Head of caudate nucleus (tissue), 42 donors: ENCODE measurements at regions of chr9 and their contacts with region 1.

Region 1: DNA sequence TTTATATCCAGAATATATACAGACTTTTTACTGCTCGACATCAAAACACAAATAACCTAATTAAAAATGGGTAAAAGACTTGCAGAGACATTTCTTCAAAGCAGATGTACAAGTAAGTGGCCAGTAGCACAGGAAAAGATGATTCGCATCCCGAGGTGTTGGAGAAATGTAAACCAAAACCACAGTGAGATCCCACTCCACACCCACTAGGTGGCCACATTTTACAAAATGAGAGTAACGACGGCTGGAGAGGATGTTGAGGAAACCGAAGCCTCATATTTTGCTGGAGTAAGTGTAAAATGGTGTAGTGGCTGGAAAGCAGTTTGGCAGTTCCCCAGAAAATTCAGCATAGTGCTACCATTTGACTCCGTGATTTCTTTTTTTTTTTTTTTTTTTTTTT is 21.2 kb upstream of the GBGT1 start:
- DNase-seq: peak in 25 of 42 donors; percentile 28 to 74 (median 53)

Region 2: DNA sequence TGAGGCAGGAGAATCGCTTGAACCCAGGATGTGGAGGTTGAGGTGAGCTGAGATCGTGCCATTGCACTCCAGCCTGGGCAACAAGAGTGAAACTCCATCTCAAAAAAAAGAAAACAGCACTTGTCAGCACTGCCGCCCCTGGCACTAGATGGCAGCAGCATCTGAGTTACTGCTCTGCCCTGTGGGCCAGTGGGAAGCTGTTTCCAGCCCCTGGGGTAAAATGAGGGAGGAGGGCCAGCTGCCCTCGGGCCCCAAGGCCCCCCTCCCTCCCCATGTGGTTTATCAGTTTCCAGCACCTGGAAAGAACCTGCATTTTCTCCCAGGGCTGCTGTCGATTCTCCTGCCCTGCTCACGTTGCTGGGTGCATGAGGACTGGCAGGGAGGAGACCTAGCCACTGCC is 136.4 kb before region 1 on chr9:
- intact Hi-C with region 1: no loop called
- DNase-seq: peak; percentile 29 to 82 (median 62)

Region 3: GRCh38 chr9:133334161-133334560 is 149.2 kb after region 1 on chr9:
- intact Hi-C with region 1: loop called (anchors 5 kb)
- DNase-seq: peak in 4 of 42 donors; percentile 2 to 10 (median 5)

Region 4: DNA sequence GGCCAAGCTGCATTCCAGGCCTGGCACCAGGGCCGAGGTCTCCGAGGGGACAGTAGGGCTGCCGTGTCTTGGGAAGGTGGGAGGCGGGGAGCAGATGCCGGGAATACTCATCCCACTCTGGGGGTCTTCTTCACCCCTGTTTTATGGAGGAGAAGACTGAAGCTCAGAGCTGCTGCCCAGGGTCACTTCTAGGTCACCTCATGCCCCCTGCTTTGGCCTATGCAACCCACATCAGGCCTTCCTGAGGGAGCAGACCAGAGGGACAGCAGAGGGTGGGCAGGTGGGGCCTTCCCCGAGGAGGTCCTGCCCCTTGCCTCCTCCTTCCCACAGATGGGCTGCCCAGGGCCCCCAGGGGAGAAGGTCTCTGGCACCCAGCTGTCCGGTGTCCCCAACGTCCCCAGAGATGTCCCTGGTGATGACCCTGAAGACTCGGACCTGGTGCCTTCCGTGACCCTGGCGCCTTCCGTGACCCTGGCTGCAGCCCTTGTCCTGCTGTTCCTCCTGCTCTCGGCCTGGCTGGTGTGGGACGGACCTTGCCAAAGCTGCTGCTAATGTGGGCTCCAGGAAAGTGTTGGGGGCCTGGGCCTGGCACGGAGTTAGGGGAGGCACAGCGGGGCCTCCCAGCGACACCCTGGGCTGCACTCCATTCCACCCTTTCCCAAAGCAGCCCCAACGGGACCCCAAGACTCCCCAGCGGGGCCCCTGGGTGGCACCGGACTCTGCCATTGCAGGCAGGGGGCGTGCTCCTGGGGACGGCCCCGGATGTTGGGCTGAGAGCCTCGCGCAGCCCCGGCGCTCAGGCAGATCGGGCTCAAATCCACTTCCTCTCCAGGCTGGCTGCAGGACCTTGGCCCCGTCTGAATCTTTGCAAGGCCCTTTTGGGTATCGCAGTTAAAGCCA is 300.6 kb after region 1 on chr9:
- intact Hi-C with region 1: loop called (anchors 5 kb)
- DNase-seq: no peak